GM10248 (cell line): ENCODE measurements at regions of chr4 and their contacts with region 1.

Region 1: DNA sequence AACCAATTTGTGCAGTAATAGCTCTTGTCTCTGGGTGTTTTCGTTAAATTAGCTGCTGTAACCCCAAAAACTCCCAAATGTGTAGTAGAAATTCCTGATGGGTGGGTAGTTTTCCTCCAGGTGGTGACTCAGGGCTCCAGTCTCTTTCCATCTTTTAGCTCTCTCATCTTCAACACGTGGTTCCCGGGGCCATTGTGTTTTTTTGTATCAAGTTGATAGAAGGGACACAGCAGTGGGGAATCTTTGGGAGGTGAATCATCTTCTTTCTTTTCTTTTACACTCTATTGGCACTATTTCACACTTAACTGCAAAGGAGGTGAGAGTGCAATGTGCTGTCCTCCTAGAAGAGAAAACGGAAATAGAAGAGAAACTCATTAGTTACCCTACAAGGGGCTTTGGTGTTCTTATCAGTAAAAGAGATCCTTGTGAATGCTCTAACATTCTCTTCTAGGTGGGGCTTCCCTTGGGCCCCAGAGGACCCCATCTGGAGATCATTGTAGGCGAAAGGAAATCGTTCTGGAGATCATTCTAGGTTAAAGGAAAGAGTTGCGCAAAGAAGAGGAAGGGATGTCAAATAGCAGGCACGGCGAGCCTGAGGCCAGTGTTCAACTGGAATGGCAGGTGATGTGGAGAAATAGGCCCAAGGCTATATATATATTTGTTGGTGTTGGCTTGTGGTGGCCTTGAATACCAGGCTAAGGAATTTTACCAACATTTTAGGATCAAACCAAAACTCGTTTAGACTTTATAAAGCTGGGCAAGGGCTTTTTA is 68.2 kb upstream of the ACSL1 start:
- DNase-seq: no peak
- CTCF ChIP-seq: no peak

Region 2: DNA sequence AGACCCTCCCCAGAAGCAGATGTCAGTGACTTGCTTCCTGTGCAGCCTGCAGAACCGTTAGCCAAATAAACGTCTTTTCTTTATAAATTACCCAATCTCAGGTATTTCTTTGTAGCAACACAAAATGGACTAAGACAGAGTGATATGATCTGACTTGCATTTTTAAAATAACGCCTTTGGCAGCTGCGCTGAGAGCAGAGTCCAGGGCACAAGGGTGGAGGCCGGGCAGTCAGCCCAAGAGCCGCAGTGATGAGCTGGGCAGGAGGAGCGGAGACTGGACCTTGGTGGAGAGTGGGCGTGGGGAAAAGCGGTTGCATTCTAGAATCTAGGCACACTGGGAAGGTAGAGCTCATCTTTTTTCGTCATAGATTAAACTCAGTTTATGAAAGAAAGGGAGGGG is 11.7 kb before region 1 on chr4:
- CTCF ChIA-PET with region 1: interaction called, 10 read pairs
- POLR2A ChIA-PET with region 1: no interaction called
- DNase-seq: no peak
- CTCF ChIP-seq: no peak